Activated CD4-positive, alpha-beta memory T cell treated with anti-CD3 and anti-CD28 coated beads, Interleukin-2, amount 10 ng/mL, durations not matched to agents 7 days and 5 days (primary cell): ENCODE measurements at regions of chr14 and their contacts with region 1.

Region 1: DNA sequence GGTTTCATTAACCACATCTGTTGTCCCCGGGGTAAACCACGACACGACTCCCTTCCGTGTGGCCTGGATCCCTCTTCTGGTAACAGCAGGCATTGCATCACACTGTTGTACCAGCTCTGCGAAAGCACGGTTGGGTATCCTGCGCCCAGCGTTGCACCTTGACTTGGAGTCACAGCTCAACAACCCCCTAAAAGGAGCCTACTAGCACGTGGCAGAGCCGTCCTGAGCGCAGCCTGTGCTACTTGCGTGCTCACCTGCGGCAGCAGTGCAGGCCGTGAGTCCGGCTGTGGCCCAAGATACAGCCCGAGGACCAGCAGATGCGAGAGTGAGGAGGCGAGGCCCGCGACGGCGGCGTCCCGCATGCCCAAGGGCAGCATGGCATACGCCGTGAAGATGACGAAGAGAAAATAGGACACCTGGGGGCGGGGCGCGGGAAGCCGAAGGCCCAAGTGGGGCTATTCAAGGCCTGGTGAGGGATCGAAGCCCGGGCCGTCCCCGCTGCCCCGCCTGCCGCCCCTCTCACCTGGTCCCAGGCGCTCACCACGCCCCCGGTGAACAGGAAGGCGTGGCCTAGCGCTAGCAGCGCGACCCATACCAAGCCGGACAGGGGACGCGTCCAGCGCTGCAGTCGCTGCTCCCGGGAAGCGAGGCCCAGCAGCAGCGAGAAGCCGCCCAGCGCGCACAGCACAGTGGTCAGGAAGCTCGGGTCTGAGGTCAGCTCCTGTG is 2.4 kb downstream of the ADCY4 start:
- DNase-seq: peak; percentile 89
- H3K4me3 Mint-ChIP-seq: peak overlapping the region; percentile 71
- H3K27ac Mint-ChIP-seq: peak overlapping the region; percentile 61
- H3K4me1 Mint-ChIP-seq: peaks cover 81% of the 10 kb centered on the region
- H3K27me3 Mint-ChIP-seq: peaks cover 35% of the 10 kb centered on the region

Region 2: DNA sequence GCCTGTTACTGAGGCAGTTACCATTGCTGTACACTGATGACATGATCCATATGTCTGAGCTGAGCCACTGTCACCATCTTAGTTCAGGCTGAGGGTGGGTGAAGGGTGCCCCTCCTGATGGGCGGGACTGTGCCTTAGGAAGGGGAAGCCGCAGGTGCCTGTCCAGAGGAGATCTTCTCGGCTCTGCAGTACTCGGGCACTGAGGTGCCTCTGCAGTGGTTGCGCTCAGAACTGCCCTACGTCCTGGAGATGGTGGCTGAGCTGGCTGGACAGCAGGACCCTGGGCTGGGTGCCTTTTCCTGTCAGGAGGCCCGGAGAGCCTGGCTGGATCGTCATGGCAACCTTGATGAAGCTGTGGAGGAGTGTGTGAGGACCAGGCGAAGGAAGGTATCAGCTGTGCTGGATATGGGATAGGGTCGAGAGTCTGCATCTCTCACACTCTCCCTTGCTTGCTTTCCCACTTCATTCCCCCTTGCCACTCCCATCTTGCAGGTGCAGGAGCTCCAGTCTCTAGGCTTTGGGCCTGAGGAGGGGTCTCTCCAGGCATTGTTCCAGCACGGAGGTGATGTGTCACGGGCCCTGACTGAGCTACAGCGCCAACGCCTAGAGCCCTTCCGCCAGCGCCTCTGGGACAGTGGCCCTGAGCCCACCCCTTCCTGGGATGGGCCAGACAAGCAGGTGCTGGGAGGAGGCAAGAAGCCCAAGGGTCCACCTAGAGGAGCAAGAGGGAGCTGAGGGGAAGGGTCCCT is 181.3 kb before region 1 on chr14:
- CTCF ChIA-PET with region 1: no interaction called
- POLR2A ChIA-PET with region 1: no interaction called
- DNase-seq: no peak
- H3K4me3 Mint-ChIP-seq: no peak overlapping the region
- H3K27ac Mint-ChIP-seq: no peak overlapping the region
- H3K4me1 Mint-ChIP-seq: peaks cover 28% of the 10 kb centered on the region
- H3K27me3 Mint-ChIP-seq: no peaks in the 10 kb centered on the region

Region 3: DNA sequence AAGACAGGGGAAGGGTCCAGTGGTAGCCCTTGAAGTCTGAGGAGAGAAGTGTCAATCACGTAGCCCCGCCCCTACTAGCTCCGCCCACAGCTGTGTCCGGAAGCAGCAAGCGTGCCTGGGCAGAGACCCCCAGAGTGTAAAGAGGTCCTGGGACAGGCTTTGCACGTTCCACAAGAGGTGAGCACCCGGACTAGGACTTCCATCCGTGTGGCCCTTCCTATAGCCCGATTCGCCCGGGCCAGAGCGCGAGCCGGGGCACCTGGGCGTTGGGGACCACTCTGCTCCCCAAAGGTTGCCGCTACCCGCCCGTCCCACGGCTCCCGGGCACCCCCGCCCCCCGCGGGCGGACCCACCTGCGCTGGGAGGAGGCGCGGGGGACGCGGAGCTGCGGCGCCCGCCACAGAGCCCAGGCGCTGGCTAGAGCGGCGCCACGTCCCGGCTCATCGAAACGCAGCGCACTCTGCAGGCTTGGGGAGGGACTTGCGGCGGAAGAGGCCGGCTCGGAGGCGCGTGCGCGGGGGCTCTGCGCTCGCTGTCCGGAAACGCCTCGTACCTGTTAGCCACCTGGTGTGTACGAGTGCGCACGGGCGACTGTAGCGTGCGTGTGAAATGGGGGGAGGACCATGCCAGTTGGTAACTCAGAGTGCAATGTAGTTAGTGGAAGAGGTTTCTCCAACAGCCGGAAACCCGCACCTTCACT is 61.1 kb before region 1 on chr14 and contains the start of gene RABGGTA:
- CTCF ChIA-PET with region 1: interaction called, 18 read pairs
- POLR2A ChIA-PET with region 1: interaction called, 4 read pairs
- DNase-seq: peak; percentile 90
- H3K4me3 Mint-ChIP-seq: peak within 1 kb of the TSS; percentile 86
- H3K27ac Mint-ChIP-seq: peak within 1 kb of the TSS; percentile 92
- H3K4me1 Mint-ChIP-seq: peaks cover 43% of the 10 kb centered on the region
- H3K27me3 Mint-ChIP-seq: no peaks in the 10 kb centered on the region
- total RNA-seq, gene RABGGTA: 40.2 to 41.0 TPM

Region 4: GRCh38 chr14:24347134-24347533 is 14.7 kb after region 1 on chr14:
- CTCF ChIA-PET with region 1: interaction called, 13 read pairs
- POLR2A ChIA-PET with region 1: no interaction called
- DNase-seq: no peak
- H3K4me3 Mint-ChIP-seq: no peak overlapping the region
- H3K27ac Mint-ChIP-seq: no peak overlapping the region
- H3K4me1 Mint-ChIP-seq: no peaks in the 10 kb centered on the region
- H3K27me3 Mint-ChIP-seq: peaks cover 63% of the 10 kb centered on the region

Region 5: DNA sequence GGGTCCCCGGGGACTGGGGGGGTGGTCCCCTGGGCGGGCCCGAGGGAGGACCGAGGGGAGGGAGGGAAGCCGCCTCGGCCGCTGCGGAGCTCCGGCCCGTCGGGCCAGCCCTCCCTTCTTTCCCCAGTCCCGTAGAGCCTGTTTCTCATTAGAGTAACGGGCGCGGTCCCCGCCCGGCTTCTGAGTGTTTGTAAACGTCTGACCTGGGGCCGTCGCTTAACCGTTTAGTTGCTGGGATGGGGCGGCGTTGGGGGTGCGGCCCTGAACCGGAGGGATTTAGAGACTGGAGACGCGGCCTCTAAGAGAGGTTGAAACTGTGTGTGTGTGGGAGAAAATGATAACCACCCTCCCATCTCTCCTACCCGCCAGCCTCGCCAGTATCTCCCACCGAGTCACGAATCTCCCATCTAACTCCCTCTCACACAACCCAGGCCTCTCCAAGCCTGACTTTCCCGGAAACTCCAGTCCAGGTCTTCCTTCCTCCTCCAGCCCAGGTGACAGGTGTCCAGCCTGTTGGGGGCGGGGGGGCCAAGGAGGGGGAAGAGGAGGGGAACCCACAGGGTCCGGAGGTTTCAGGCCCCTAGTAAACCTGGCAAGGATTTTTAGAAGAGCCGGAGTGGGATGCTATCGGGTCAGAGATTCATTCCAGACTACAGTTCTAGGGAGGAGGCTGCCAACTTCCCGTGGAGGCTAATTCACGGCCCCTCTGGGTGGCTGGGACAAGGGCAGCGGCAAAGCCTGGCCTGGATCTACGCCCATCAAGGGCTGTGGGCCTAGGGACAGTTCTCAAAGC is 34.5 kb after region 1 on chr14:
- CTCF ChIA-PET with region 1: interaction called, 12 read pairs
- POLR2A ChIA-PET with region 1: no interaction called
- DNase-seq: no peak
- H3K4me3 Mint-ChIP-seq: no peak overlapping the region
- H3K27ac Mint-ChIP-seq: no peak overlapping the region
- H3K4me1 Mint-ChIP-seq: peaks cover 20% of the 10 kb centered on the region
- H3K27me3 Mint-ChIP-seq: peaks cover 53% of the 10 kb centered on the region

Region 6: DNA sequence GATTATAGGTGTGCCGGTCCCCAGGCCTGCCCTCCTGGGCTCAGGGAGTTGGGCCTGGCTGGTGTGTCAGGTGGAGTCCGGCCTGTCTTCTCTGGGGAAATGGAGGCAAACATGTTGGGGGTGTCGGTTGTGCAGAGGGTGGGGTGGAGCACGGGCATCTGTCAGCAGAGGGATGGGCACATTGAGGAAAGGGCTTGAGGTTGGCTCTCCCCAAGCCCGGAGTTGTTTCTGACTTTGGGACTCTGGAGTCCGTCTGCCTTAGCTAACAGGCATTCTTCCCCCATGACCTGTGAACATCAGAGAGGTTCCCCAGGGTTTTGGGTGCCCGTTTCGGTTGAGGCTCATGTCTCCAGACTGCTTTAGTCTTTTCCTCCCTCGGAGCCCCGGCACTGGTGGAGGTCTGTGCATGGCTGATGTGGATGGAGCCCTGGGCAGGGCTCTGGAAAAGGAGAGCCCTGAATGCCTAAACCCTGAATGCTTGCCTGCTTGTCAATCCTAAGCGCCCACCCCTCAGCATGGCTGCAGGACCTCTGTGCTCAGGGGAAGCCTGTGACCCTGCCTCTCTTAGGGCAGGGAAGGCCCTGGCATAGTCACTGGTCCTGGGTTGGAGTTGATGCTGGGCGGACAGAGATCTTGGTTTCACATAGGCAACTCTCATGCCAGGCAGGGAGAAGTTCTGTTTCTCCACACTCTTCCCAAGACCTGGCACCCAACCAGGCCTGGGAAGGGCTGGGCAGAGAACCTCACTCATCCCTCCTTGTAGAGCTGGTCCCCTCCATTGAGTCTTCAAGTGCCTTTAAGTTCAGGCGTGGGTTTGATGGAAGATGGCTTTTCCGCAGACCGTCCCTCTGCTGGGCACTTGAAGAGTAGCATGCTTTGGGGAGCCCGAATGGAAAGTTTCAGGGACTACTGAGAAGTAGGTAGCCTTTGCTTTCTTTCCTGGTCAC is 79.3 kb after region 1 on chr14:
- CTCF ChIA-PET with region 1: interaction called, 16 read pairs
- POLR2A ChIA-PET with region 1: no interaction called
- DNase-seq: peak; percentile 43
- H3K4me3 Mint-ChIP-seq: no peak overlapping the region
- H3K27ac Mint-ChIP-seq: no peak overlapping the region
- H3K4me1 Mint-ChIP-seq: no peaks in the 10 kb centered on the region
- H3K27me3 Mint-ChIP-seq: peaks cover 6% of the 10 kb centered on the region

Region 7: GRCh38 chr14:24442273-24443052 is 110.0 kb after region 1 on chr14 and contains the start of gene SDR39U1:
- CTCF ChIA-PET with region 1: interaction called, 169 read pairs
- POLR2A ChIA-PET with region 1: interaction called, 221 read pairs
- DNase-seq: peak; percentile 98
- H3K4me3 Mint-ChIP-seq: peak within 1 kb of the TSS; percentile 92
- H3K27ac Mint-ChIP-seq: peak within 1 kb of the TSS; percentile 97
- H3K4me1 Mint-ChIP-seq: peaks cover 52% of the 10 kb centered on the region
- H3K27me3 Mint-ChIP-seq: no peaks in the 10 kb centered on the region
- total RNA-seq, gene SDR39U1: 38.5 to 41.6 TPM